Naive thymus-derived CD4-positive, alpha-beta T cell (primary cell): ENCODE measurements at regions of chr5 and their contacts with region 1.

Region 1: GRCh38 chr5:174935854-174936474 is 211.6 kb downstream of the MSX2 start:
- DNase-seq: peak in 5 of 9 donors; percentile 6 to 35 (median 20)
- ATAC-seq: peak; percentile 51
- H3K4me3 ChIP-seq: no peak overlapping the region
- H3K4me3 Mint-ChIP-seq: no peak overlapping the region
- H3K27ac ChIP-seq: no peak overlapping the region
- H3K27ac Mint-ChIP-seq: no peak overlapping the region
- H3K4me1 ChIP-seq: no peaks in the 10 kb centered on the region
- H3K4me1 Mint-ChIP-seq: no peaks in the 10 kb centered on the region
- H3K27me3 ChIP-seq: peaks cover 0 to under 1% of the 10 kb centered on the region in 2 donors
- H3K27me3 Mint-ChIP-seq: peaks cover 2 to 51% (median 38%) of the 10 kb centered on the region in 5 donors

Region 2: DNA sequence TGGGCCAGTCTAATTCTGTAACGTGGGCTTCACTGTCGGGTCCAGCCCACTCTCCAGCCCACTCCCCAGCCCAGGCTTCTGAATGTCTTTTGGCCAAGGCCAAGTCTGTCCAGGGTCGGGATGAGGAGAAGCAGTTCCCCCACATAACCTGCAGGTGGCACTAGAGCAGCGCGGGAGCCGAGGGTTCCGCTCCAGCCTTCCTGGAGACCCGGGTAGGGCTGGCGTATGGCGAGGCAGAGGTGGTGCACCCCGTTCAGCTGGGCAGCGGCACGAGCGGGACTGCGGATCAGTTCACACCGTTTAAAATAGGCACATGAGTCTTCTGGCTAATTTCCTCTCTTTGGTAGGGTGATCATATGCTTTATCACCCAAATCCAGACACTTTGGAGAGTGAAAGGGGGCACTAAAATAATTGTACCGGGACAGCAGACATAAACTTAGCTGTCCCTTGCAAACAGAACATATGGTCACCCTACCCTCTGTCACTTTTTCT is 25.7 kb before region 1 on chr5:
- CTCF ChIA-PET with region 1: interaction called, 3 read pairs
- POLR2A ChIA-PET with region 1: no interaction called
- intact Hi-C with region 1: loop called (anchors 1 kb)
- DNase-seq: peak; percentile 2 to 61 (median 20)
- ATAC-seq: peak; percentile 75
- H3K4me3 ChIP-seq: no peak overlapping the region
- H3K4me3 Mint-ChIP-seq: peak overlapping the region in 1 of 10 donors; percentile 24
- H3K27ac ChIP-seq: no peak overlapping the region
- H3K27ac Mint-ChIP-seq: no peak overlapping the region
- H3K4me1 ChIP-seq: no peaks in the 10 kb centered on the region
- H3K4me1 Mint-ChIP-seq: peaks cover 0 to 5% (median 0%) of the 10 kb centered on the region in 7 donors
- H3K27me3 ChIP-seq: peaks cover 0 to 4% of the 10 kb centered on the region in 2 donors
- H3K27me3 Mint-ChIP-seq: peaks cover 20 to 74% (median 55%) of the 10 kb centered on the region in 5 donors

Region 3: DNA sequence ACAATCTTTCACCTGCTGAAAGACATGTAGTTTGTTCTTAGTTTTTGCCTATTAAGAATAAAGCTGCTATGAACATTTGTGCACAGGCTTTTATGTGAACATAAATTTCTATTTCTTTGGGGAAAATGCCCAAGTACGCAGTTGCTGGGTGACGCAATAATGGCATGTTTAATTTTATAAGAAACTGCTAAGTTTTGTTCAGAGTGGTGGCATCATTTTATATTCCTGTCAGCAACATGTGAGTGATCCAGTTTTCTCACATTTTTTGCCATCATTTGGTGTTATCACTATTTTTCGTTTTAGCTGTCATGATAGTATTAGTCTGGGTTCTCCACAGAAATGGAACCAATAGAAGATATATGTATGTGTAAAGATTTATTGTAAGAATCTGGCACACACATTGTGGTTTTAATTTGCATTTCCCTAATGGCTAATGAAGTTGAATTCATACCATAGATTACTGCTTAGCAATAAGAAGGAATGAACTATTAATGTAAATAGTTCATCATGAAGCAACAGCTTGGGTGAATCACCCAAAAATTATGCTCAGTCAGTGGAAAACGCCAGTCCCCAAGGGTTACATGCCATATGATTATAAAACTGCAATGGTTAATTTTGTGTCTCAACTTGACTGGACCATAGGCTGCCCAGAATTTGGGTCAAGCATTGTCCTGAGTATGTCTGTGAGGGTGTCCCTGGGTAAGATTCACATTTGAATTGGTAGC is 147.1 kb after region 1 on chr5:
- CTCF ChIA-PET with region 1: no interaction called
- POLR2A ChIA-PET with region 1: no interaction called
- intact Hi-C with region 1: no loop called
- DNase-seq: no peak
- ATAC-seq: no peak
- H3K4me3 ChIP-seq: no peak overlapping the region
- H3K4me3 Mint-ChIP-seq: no peak overlapping the region
- H3K27ac ChIP-seq: no peak overlapping the region
- H3K27ac Mint-ChIP-seq: no peak overlapping the region
- H3K4me1 ChIP-seq: no peaks in the 10 kb centered on the region
- H3K4me1 Mint-ChIP-seq: no peaks in the 10 kb centered on the region
- H3K27me3 ChIP-seq: no peaks in the 10 kb centered on the region
- H3K27me3 Mint-ChIP-seq: peaks cover 2 to 9% (median 5%) of the 10 kb centered on the region in 5 donors